PC-3 (cell line): ENCODE measurements at regions of chr10 and their contacts with region 1.

Region 1: DNA sequence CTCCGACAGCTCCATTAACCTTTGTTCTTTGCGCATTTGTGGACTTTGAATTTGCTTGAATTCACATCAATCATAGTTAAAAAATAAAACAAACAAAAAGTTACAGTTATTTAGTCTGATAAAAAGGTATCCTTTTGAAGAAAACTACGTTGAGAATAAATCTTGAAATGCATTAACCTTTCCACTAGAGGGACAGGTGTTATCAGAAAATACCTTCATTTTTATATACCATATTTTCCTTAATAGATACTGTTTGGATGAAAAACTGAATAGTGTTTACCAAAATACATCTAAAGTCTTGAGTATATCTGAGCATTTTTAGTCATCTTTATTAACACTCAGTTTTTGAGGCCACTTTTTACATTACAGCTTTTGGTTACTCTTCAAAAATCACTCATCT is 371.9 kb downstream of the ZWINT start:
- DNase-seq: peak; percentile 32
- ATAC-seq: peak; percentile 33; the same call in 1 of the 2 replicates
- H3K4me3 ChIP-seq: no peak overlapping the region
- H3K27ac ChIP-seq: no peak overlapping the region
- H3K4me1 ChIP-seq: no peaks in the 10 kb centered on the region
- H3K27me3 ChIP-seq: no peaks in the 10 kb centered on the region
- CTCF ChIP-seq: peak; percentile 71

Region 2: DNA sequence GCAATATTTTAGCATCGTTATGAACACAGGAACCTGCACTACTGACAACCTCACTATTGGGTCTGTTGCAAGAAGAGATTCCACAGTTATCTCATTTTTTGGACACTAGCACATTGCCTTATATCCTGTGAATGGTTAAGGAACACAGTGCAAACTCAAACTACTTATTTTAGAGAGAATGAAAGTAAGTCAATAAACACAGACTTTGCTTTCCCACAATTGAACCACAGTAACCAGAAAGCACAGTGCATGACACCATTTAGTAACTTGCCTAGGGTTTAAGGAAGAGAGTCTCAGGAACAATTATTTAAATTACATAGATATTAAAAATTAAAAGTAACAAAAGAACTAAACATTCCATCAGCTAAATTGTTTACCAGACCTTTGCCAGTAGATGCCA is 96.9 kb before region 1 on chr10:
- CTCF ChIA-PET with region 1: no interaction called
- POLR2A ChIA-PET with region 1: no interaction called
- intact Hi-C with region 1: no loop called
- DNase-seq: no peak
- ATAC-seq: no peak
- H3K4me3 ChIP-seq: no peak overlapping the region
- H3K27ac ChIP-seq: no peak overlapping the region
- H3K4me1 ChIP-seq: no peaks in the 10 kb centered on the region
- H3K27me3 ChIP-seq: no peaks in the 10 kb centered on the region
- CTCF ChIP-seq: no peak

Region 3: DNA sequence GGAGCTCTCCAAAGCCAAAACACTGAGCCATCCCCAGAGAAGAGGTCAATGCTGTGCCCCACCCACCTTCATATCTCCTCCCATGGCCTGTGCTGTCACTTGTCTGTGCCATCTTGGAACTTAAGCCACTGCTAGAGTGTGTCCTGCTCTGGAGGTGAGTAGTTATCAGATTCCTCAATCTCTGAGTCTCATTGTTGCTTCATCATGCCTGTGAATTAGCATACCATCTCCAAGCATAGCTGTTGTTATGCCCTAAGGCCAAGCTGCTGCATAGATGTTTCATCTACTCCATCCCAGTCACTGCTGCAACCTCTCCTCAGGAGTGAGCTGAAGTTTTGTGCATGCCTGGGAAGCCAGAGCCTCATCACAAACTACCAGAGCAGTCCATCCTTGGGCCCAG is 22.9 kb after region 1 on chr10:
- CTCF ChIA-PET with region 1: no interaction called
- POLR2A ChIA-PET with region 1: no interaction called
- intact Hi-C with region 1: no loop called
- DNase-seq: no peak
- ATAC-seq: no peak
- H3K4me3 ChIP-seq: no peak overlapping the region
- H3K27ac ChIP-seq: no peak overlapping the region
- H3K4me1 ChIP-seq: no peaks in the 10 kb centered on the region
- H3K27me3 ChIP-seq: no peaks in the 10 kb centered on the region
- CTCF ChIP-seq: no peak

Region 4: GRCh38 chr10:56240471-56240870 is 251.3 kb after region 1 on chr10:
- CTCF ChIA-PET with region 1: no interaction called
- POLR2A ChIA-PET with region 1: no interaction called
- intact Hi-C with region 1: no loop called
- DNase-seq: no peak
- ATAC-seq: no peak
- H3K4me3 ChIP-seq: peak overlapping the region; percentile 42
- H3K27ac ChIP-seq: no peak overlapping the region
- H3K4me1 ChIP-seq: no peaks in the 10 kb centered on the region
- H3K27me3 ChIP-seq: no peaks in the 10 kb centered on the region
- CTCF ChIP-seq: no peak

Region 5: DNA sequence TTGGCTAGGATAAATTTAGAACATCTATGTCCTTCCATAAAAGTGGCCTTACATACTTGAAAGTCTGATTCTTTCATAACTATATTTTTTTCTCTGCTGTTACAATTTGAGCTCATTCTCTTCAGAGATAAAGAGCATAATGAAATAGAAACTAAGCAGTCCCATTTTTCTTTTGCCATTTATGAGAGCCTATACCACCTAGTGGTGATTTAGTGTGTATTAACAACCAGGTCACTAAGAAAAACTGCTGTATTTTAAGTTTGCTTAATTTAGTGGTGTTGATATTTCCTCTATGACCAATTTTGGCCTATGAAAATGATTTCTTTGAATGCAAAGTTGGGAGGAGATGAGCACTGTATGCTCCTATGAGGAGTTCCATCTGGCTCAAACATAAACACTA is 460.6 kb after region 1 on chr10:
- CTCF ChIA-PET with region 1: no interaction called
- POLR2A ChIA-PET with region 1: no interaction called
- intact Hi-C with region 1: loop called (anchors 2 kb)
- DNase-seq: peak; percentile 53
- ATAC-seq: peak; percentile 91
- H3K4me3 ChIP-seq: no peak overlapping the region
- H3K27ac ChIP-seq: no peak overlapping the region
- H3K4me1 ChIP-seq: no peaks in the 10 kb centered on the region
- H3K27me3 ChIP-seq: no peaks in the 10 kb centered on the region
- CTCF ChIP-seq: peak; percentile 86